ENCODE measurements at regions of chr9 and their contacts with region 1.

Region 1: GRCh38 chr9:108565651-108566378 is 290.0 kb downstream of the ACTL7B start:
- DNase-seq: peak; percentile 38
- ATAC-seq: no peak
- H3K4me3 Mint-ChIP-seq: no peak overlapping the region
- H3K27ac Mint-ChIP-seq: no peak overlapping the region
- H3K4me1 Mint-ChIP-seq: no peaks in the 10 kb centered on the region
- H3K27me3 Mint-ChIP-seq: peaks cover 4% of the 10 kb centered on the region

Region 2: DNA sequence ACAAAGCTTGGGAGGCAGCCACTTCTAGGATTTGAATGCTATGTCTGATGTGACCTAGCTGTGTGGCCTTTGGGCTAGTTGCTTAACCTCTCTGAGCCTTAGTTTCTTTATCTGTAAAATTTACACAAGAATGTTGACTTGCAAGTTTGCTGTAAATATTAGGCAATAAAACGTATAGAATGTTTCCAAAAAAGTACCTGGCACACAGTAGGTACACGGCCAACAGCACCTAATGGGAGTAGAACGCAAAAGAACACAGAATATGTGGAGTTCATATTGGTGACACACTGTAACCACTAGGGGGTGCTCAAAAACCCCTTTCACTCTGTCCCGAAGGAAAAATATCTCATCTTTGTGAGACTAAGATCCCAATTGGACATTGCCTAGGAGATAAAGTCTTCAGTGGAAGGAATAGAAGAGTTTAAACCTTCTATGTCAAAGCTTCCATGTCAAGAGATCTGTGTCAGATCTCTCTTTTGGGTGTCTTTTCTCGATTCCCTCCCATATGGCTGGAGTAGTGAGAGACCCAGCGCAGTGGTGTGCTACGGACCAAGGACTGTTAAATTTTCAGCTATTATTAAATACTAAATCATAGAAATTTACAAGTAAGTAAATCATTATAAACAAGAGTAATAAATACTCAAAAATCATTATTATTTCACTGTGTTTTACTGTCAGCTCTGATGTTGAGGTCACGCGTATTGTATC is 1428.2 kb before region 1 on chr9:
- CTCF ChIA-PET with region 1: no interaction called
- POLR2A ChIA-PET with region 1: no interaction called
- intact Hi-C with region 1: loop called in 1 of 2 experiments (anchors 5 kb)
- DNase-seq: peak; percentile 11
- ATAC-seq: no peak
- H3K4me3 Mint-ChIP-seq: no peak overlapping the region
- H3K27ac Mint-ChIP-seq: no peak overlapping the region
- H3K4me1 Mint-ChIP-seq: no peaks in the 10 kb centered on the region
- H3K27me3 Mint-ChIP-seq: peaks cover 12% of the 10 kb centered on the region

Region 3: DNA sequence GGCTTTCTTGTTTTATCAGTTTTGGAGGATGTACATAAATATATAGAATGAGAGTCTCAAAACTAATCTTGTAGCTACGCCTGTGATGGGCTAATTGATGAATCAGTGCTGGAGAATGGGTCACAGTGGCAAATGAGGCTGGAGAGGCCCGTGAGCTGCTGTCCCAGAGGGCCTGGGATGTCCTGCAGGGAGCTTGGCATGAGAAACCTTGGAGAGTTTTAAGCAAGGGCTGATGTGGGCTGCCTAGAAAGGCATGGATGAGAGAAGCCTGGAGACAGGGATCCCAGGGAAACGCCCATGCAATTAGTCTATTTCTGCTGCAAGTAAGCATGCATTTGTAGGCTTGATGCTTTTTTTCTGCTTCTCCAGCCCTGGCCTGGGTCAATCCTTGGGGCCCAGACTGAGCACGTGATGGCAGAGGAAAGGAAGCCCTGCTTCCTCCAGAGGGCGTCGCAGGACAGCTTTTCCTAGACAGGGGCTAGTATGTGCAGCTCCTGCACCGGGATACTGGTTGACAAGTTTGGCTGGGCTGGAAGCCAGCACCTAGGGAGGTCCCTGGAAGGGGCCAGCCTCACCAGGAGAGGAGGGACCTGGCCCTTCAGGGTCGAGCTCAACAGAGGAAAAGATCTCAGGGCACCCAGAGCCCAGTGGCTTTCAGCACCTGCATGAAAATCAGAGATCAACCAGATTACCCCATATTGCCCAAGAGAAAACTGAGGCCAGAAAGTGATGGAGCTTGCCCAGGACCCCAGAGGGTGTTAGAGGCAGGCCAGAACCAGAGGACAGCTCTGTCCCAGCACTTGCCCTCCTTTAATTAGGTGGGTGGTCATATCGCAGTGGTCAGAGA is 1143.6 kb before region 1 on chr9:
- CTCF ChIA-PET with region 1: interaction called, 7 read pairs
- POLR2A ChIA-PET with region 1: no interaction called
- intact Hi-C with region 1: loop called (anchors 1 to 5 kb)
- DNase-seq: peak; percentile 70
- ATAC-seq: peak; percentile 55
- H3K4me3 Mint-ChIP-seq: no peak overlapping the region
- H3K27ac Mint-ChIP-seq: no peak overlapping the region
- H3K4me1 Mint-ChIP-seq: peaks cover 8% of the 10 kb centered on the region
- H3K27me3 Mint-ChIP-seq: peaks cover 16% of the 10 kb centered on the region

Region 4: GRCh38 chr9:107465467-107466451 is 1100.1 kb before region 1 on chr9:
- CTCF ChIA-PET with region 1: no interaction called
- POLR2A ChIA-PET with region 1: no interaction called
- intact Hi-C with region 1: loop called (anchors 1 to 5 kb)
- DNase-seq: peak; percentile 69
- ATAC-seq: peak; percentile 86
- H3K4me3 Mint-ChIP-seq: no peak overlapping the region
- H3K27ac Mint-ChIP-seq: no peak overlapping the region
- H3K4me1 Mint-ChIP-seq: peaks cover 3% of the 10 kb centered on the region
- H3K27me3 Mint-ChIP-seq: peaks cover 34% of the 10 kb centered on the region

Region 5: GRCh38 chr9:107484117-107484723 is 1081.6 kb before region 1 on chr9:
- CTCF ChIA-PET with region 1: no interaction called
- POLR2A ChIA-PET with region 1: no interaction called
- intact Hi-C with region 1: loop called in 1 of 2 experiments (anchors 1 kb)
- DNase-seq: peak; percentile 15
- ATAC-seq: peak; percentile 49
- H3K4me3 Mint-ChIP-seq: no peak overlapping the region
- H3K27ac Mint-ChIP-seq: no peak overlapping the region
- H3K4me1 Mint-ChIP-seq: peaks cover 7% of the 10 kb centered on the region
- H3K27me3 Mint-ChIP-seq: peaks cover 36% of the 10 kb centered on the region

Region 6: GRCh38 chr9:108282872-108283271 is 282.9 kb before region 1 on chr9:
- CTCF ChIA-PET with region 1: no interaction called
- POLR2A ChIA-PET with region 1: no interaction called
- intact Hi-C with region 1: no loop called
- DNase-seq: no peak
- ATAC-seq: no peak
- H3K4me3 Mint-ChIP-seq: no peak overlapping the region
- H3K27ac Mint-ChIP-seq: no peak overlapping the region
- H3K4me1 Mint-ChIP-seq: no peaks in the 10 kb centered on the region
- H3K27me3 Mint-ChIP-seq: no peaks in the 10 kb centered on the region

Region 7: DNA sequence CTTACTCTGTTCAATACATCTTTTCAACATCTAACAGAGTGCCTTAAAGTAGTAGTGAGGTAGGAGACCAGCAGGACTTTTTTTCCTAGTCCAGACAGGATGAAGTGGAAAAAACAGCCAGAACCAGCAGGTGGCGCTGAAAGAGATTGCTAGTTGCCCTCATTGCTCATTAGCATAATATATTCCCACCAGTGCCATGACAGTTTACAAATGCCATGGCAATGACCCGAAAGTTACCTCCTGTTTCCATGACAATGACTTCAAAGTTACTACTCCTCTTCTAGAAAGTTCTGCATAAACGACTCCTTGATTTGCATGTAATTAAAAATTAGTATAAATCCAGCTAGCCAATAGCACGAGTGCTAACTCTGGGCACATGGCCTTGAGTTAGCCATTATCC is 97.4 kb before region 1 on chr9:
- CTCF ChIA-PET with region 1: no interaction called
- POLR2A ChIA-PET with region 1: no interaction called
- intact Hi-C with region 1: loop called in 1 of 2 experiments (anchors 1 kb)
- DNase-seq: peak; percentile 64
- ATAC-seq: no peak
- H3K4me3 Mint-ChIP-seq: no peak overlapping the region
- H3K27ac Mint-ChIP-seq: no peak overlapping the region
- H3K4me1 Mint-ChIP-seq: no peaks in the 10 kb centered on the region
- H3K27me3 Mint-ChIP-seq: no peaks in the 10 kb centered on the region